GM12878 (cell line): ENCODE measurements at regions of chr18 and their contacts with region 1.

Region 1: GRCh38 chr18:11995445-11996189 is 14.3 kb downstream of the IMPA2 start:
- DNase-seq: no peak
- ATAC-seq: peak; percentile 93
- H3K4me3 ChIP-seq: no peak overlapping the region
- H3K27ac ChIP-seq: no peak overlapping the region
- H3K4me1 ChIP-seq: peaks cover 8% of the 10 kb centered on the region
- H3K27me3 ChIP-seq: no peaks in the 10 kb centered on the region
- CTCF ChIP-seq: peak; percentile 80 to 90 (median 87)
- EP300 ChIP-seq: no peak
- POLR2A ChIP-seq: no peak
- RAD21 ChIP-seq: peak; percentile 88

Region 2: GRCh38 chr18:11826836-11827235 is 168.8 kb before region 1 on chr18:
- CTCF ChIA-PET with region 1: no interaction called
- POLR2A ChIA-PET with region 1: no interaction called
- RAD21 ChIA-PET with region 1: no interaction called
- SMC1A ChIA-PET with region 1: no interaction called
- in situ Hi-C with region 1: no loop called
- intact Hi-C with region 1: no loop called
- DNase-seq: no peak
- ATAC-seq: no peak
- H3K4me3 ChIP-seq: no peak overlapping the region
- H3K27ac ChIP-seq: no peak overlapping the region
- H3K4me1 ChIP-seq: no peaks in the 10 kb centered on the region
- H3K27me3 ChIP-seq: no peaks in the 10 kb centered on the region
- CTCF ChIP-seq: 0 out of 6 replicates have a peak, but pooled peaks of 1 of the 3 experiments have one; percentile 14
- EP300 ChIP-seq: no peak
- POLR2A ChIP-seq: no peak
- RAD21 ChIP-seq: 0 out of 2 replicates have a peak, but pooled peaks have one; percentile 19

Region 3: GRCh38 chr18:11932393-11932792 is 63.2 kb before region 1 on chr18:
- CTCF ChIA-PET with region 1: interaction called, 122 read pairs
- POLR2A ChIA-PET with region 1: no interaction called
- RAD21 ChIA-PET with region 1: interaction called, 40 read pairs
- SMC1A ChIA-PET with region 1: interaction called, 46 read pairs
- in situ Hi-C with region 1: loop called (anchors 5 kb)
- intact Hi-C with region 1: no loop called
- DNase-seq: no peak
- ATAC-seq: no peak
- H3K4me3 ChIP-seq: no peak overlapping the region
- H3K27ac ChIP-seq: no peak overlapping the region
- H3K4me1 ChIP-seq: no peaks in the 10 kb centered on the region
- H3K27me3 ChIP-seq: no peaks in the 10 kb centered on the region
- CTCF ChIP-seq: no peak
- EP300 ChIP-seq: no peak
- POLR2A ChIP-seq: no peak
- RAD21 ChIP-seq: no peak

Region 4: GRCh38 chr18:12049978-12050811 is 54.6 kb after region 1 on chr18:
- CTCF ChIA-PET with region 1: no interaction called
- POLR2A ChIA-PET with region 1: no interaction called
- RAD21 ChIA-PET with region 1: no interaction called
- SMC1A ChIA-PET with region 1: no interaction called
- in situ Hi-C with region 1: no loop called
- intact Hi-C with region 1: no loop called
- DNase-seq: peak; percentile 59
- ATAC-seq: peak; percentile 97
- H3K4me3 ChIP-seq: peak overlapping the region; percentile 24; the same call in 1 of the 2 replicates
- H3K27ac ChIP-seq: peak overlapping the region; percentile 73
- H3K4me1 ChIP-seq: peaks cover 32% of the 10 kb centered on the region
- H3K27me3 ChIP-seq: no peaks in the 10 kb centered on the region
- CTCF ChIP-seq: no peak
- EP300 ChIP-seq: peak in 1 of 2 experiments; percentile 67; a peak in 1 of 4 replicates
- POLR2A ChIP-seq: no peak
- RAD21 ChIP-seq: no peak

Region 5: GRCh38 chr18:13530879-13531387 is 1535.3 kb after region 1 on chr18:
- CTCF ChIA-PET with region 1: no interaction called
- POLR2A ChIA-PET with region 1: no interaction called
- RAD21 ChIA-PET with region 1: no interaction called
- SMC1A ChIA-PET with region 1: no interaction called
- in situ Hi-C with region 1: no loop called
- intact Hi-C with region 1: no loop called
- DNase-seq: no peak
- ATAC-seq: peak; percentile 77
- H3K4me3 ChIP-seq: no peak overlapping the region
- H3K27ac ChIP-seq: no peak overlapping the region
- H3K4me1 ChIP-seq: no peaks in the 10 kb centered on the region
- H3K27me3 ChIP-seq: peaks cover 0 to 3% of the 10 kb centered on the region in 2 experiments; a peak in 2 of 4 replicates
- CTCF ChIP-seq: peak; percentile 33 to 52 (median 43); a peak in 5 of 6 replicates
- EP300 ChIP-seq: no peak
- POLR2A ChIP-seq: no peak
- RAD21 ChIP-seq: peak; percentile 52